GM12878 (cell line): ENCODE measurements at regions of chr4 and their contacts with region 1.

Region 1: GRCh38 chr4:122914292-122914904 is 8.0 kb downstream of the NUDT6 start:
- DNase-seq: peak; percentile 8
- ATAC-seq: peak; percentile 91
- H3K4me3 ChIP-seq: no peak overlapping the region
- H3K27ac ChIP-seq: no peak overlapping the region
- H3K4me1 ChIP-seq: no peaks in the 10 kb centered on the region
- H3K27me3 ChIP-seq: no peaks in the 10 kb centered on the region
- CTCF ChIP-seq: peak; percentile 33 to 67 (median 46); a peak in 5 of 6 replicates
- EP300 ChIP-seq: no peak
- POLR2A ChIP-seq: no peak
- RAD21 ChIP-seq: peak; percentile 74

Region 2: DNA sequence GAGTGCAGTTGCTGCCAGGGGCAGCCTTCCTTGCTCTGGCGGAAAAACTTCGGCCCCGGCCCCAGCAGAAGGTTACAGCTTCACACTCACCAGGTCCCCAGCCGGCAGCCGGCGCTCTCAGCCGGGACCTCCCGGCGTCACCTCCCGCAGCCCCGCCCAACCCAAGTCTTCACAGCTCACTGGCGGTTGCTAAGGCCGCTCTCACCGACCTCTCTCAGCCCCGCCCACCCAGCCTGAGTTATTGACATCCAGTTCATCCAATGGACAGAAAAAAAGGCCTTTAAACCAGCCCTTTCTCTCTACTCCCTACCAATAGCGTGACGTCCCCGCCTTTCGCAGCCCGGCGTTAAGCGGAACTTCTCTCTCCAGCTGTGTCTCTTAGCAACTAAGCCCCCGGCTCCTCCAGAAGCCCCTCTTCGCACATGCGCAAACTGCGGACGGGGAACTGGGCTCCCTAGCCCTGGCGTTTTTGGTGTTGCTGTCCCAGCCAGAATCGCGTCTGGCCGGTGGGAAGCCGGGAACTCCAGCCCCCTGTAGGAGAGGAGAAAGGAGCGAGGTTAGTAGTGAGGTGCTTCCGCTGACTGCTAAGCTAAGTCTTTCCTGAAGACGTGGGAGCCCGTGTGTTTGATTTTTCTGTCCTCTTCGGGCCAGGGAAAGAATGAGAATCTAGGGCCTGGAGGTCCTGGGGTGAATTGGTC is 181.9 kb before region 1 on chr4 and contains the start of gene BBS12:
- CTCF ChIA-PET with region 1: interaction called, 33 read pairs
- POLR2A ChIA-PET with region 1: no interaction called
- RAD21 ChIA-PET with region 1: interaction called, 5 read pairs
- SMC1A ChIA-PET with region 1: interaction called, 10 read pairs
- in situ Hi-C with region 1: no loop called
- intact Hi-C with region 1: no loop called
- DNase-seq: peak; percentile 97
- ATAC-seq: peak; percentile 99
- H3K4me3 ChIP-seq: peak within 1 kb of the TSS; percentile 89
- H3K27ac ChIP-seq: peak within 1 kb of the TSS; percentile 27; the same call in 1 of the 2 replicates
- H3K4me1 ChIP-seq: no peaks in the 10 kb centered on the region
- H3K27me3 ChIP-seq: no peaks in the 10 kb centered on the region
- CTCF ChIP-seq: peak; percentile 46 to 56 (median 50); a peak in 5 of 6 replicates
- EP300 ChIP-seq: no peak
- POLR2A ChIP-seq: peak; percentile 45; the same call in 1 of the 2 replicates
- RAD21 ChIP-seq: peak; percentile 27; the same call in 1 of the 2 replicates
- polyA plus RNA-seq, gene BBS12: 0.40 to 0.44 TPM

Region 3: GRCh38 chr4:122764821-122765215 is 149.6 kb before region 1 on chr4:
- CTCF ChIA-PET with region 1: interaction called, 124 read pairs
- POLR2A ChIA-PET with region 1: no interaction called
- RAD21 ChIA-PET with region 1: interaction called, 34 read pairs
- SMC1A ChIA-PET with region 1: interaction called, 73 read pairs
- in situ Hi-C with region 1: no loop called
- intact Hi-C with region 1: no loop called
- DNase-seq: no peak
- ATAC-seq: peak; percentile 64
- H3K4me3 ChIP-seq: no peak overlapping the region
- H3K27ac ChIP-seq: no peak overlapping the region
- H3K4me1 ChIP-seq: peaks cover 18% of the 10 kb centered on the region
- H3K27me3 ChIP-seq: no peaks in the 10 kb centered on the region
- CTCF ChIP-seq: no peak
- EP300 ChIP-seq: no peak; a peak in 1 of 4 replicates
- POLR2A ChIP-seq: no peak
- RAD21 ChIP-seq: no peak

Region 4: DNA sequence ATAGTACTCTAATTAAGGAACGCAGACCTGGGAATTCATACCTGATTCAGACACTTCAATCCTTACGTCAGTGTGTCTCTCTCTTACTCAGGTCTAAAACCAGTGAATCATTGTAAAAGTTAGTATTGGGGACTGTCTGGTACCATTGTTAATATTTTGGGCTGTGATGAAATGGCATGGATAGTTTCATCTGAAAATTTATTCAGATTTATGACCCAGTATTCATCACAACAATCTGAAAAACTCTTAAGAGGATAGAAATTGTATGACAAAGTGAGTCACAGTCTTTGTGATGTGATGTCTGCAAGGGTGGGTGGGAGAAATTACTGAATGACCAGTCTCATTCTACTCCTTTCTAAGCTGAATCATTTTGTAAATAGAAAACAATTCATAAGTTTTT is 77.5 kb before region 1 on chr4:
- CTCF ChIA-PET with region 1: no interaction called
- POLR2A ChIA-PET with region 1: no interaction called
- RAD21 ChIA-PET with region 1: no interaction called
- SMC1A ChIA-PET with region 1: no interaction called
- in situ Hi-C with region 1: no loop called
- intact Hi-C with region 1: no loop called
- DNase-seq: no peak
- ATAC-seq: no peak
- H3K4me3 ChIP-seq: no peak overlapping the region
- H3K27ac ChIP-seq: no peak overlapping the region
- H3K4me1 ChIP-seq: no peaks in the 10 kb centered on the region
- H3K27me3 ChIP-seq: no peaks in the 10 kb centered on the region
- CTCF ChIP-seq: no peak
- EP300 ChIP-seq: no peak
- POLR2A ChIP-seq: no peak
- RAD21 ChIP-seq: no peak

Region 5: DNA sequence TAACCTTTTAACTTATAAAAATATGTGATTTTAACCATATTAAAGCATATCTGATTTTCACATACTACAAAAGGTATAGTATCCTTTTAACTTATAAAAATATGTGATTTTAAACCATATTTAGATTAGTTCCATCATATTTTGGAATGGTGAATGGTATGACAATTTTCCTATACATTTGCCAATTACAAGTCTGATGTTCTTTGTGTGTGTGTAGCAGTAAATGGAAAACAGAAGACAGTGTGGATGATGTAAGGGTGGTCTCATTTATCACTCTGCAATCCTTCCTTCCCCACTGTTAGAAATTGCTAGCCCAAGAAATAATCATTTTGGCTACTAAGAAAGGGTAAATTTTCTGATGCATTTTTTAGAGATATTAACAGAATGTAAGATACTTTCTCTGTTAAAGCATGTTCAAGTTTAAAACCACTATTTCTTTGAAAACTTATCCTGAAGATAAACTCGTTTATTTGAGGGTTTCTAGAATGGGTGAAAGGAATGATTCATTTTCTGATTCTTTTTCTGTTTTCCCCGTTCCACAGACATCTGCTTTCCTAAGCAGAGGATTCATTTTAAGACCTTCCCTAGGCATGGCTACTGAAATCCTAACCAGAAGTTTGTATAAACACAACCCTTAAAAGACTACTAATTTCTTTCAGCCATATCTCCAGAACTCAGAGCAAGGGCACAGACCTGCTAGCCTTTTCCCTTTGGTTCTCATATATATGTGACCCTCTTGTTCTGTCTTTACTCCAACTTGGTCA is 13.0 kb before region 1 on chr4:
- CTCF ChIA-PET with region 1: interaction called, 16 read pairs
- POLR2A ChIA-PET with region 1: no interaction called
- RAD21 ChIA-PET with region 1: interaction called, 3 read pairs
- SMC1A ChIA-PET with region 1: interaction called, 6 read pairs
- in situ Hi-C with region 1: no loop called
- intact Hi-C with region 1: no loop called
- DNase-seq: no peak
- ATAC-seq: no peak
- H3K4me3 ChIP-seq: no peak overlapping the region
- H3K27ac ChIP-seq: no peak overlapping the region
- H3K4me1 ChIP-seq: no peaks in the 10 kb centered on the region
- H3K27me3 ChIP-seq: no peaks in the 10 kb centered on the region
- CTCF ChIP-seq: no peak
- EP300 ChIP-seq: no peak
- POLR2A ChIP-seq: no peak
- RAD21 ChIP-seq: no peak